Activated CD8-positive, alpha-beta T cell treated with anti-CD3 and anti-CD28 coated beads, Interleukin-2, amount 10 ng/mL, durations not matched to agents 7 days and 5 days (primary cell): ENCODE measurements at regions of chr6 and their contacts with region 1.

Region 1: GRCh38 chr6:154156135-154156896 is 117.3 kb downstream of the OPRM1 start:
- DNase-seq: peak; percentile 79
- ATAC-seq: peak; percentile 96
- H3K4me3 Mint-ChIP-seq: peak overlapping the region; percentile 64
- H3K27ac Mint-ChIP-seq: peak overlapping the region; percentile 88
- H3K4me1 Mint-ChIP-seq: peaks cover 33% of the 10 kb centered on the region
- H3K27me3 Mint-ChIP-seq: no peaks in the 10 kb centered on the region

Region 2: GRCh38 chr6:152471456-152472265 is 1684.7 kb before region 1 on chr6:
- CTCF ChIA-PET with region 1: no interaction called
- POLR2A ChIA-PET with region 1: no interaction called
- DNase-seq: no peak
- ATAC-seq: no peak
- H3K4me3 Mint-ChIP-seq: no peak overlapping the region
- H3K27ac Mint-ChIP-seq: no peak overlapping the region
- H3K4me1 Mint-ChIP-seq: peaks cover 4% of the 10 kb centered on the region
- H3K27me3 Mint-ChIP-seq: peaks cover 3% of the 10 kb centered on the region

Region 3: GRCh38 chr6:154127657-154128056 is 28.7 kb before region 1 on chr6:
- CTCF ChIA-PET with region 1: no interaction called
- POLR2A ChIA-PET with region 1: no interaction called
- DNase-seq: no peak
- ATAC-seq: no peak
- H3K4me3 Mint-ChIP-seq: no peak overlapping the region
- H3K27ac Mint-ChIP-seq: no peak overlapping the region
- H3K4me1 Mint-ChIP-seq: peaks cover 3% of the 10 kb centered on the region
- H3K27me3 Mint-ChIP-seq: no peaks in the 10 kb centered on the region

Region 4: GRCh38 chr6:154169193-154169847 is 13.0 kb after region 1 on chr6:
- CTCF ChIA-PET with region 1: interaction called, 12 read pairs
- POLR2A ChIA-PET with region 1: no interaction called
- DNase-seq: no peak
- ATAC-seq: peak; percentile 23
- H3K4me3 Mint-ChIP-seq: no peak overlapping the region
- H3K27ac Mint-ChIP-seq: peak overlapping the region; percentile 45
- H3K4me1 Mint-ChIP-seq: peaks cover 29% of the 10 kb centered on the region
- H3K27me3 Mint-ChIP-seq: no peaks in the 10 kb centered on the region

Region 5: DNA sequence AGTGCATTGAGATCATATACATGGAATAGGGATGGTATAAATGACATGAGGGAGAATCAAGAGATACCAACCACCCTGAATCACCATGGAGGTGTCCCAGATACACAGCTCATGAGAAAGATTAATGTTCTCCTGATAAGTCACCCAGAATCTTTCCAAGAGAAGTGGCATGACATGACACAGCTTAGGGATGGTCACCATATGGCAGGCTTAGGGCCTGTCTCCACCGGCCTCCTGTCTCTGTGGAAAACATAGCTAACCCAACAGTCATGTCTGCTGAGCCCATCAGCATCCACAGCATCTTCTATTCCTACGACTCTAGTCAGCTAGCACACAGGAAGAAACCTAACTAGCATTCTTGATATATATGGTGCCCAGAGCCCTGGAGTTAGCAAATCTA is 67.0 kb after region 1 on chr6:
- CTCF ChIA-PET with region 1: interaction called, 10 read pairs
- POLR2A ChIA-PET with region 1: interaction called, 3 read pairs
- DNase-seq: no peak
- ATAC-seq: no peak
- H3K4me3 Mint-ChIP-seq: no peak overlapping the region
- H3K27ac Mint-ChIP-seq: no peak overlapping the region
- H3K4me1 Mint-ChIP-seq: peaks cover 43% of the 10 kb centered on the region
- H3K27me3 Mint-ChIP-seq: no peaks in the 10 kb centered on the region

Region 6: DNA sequence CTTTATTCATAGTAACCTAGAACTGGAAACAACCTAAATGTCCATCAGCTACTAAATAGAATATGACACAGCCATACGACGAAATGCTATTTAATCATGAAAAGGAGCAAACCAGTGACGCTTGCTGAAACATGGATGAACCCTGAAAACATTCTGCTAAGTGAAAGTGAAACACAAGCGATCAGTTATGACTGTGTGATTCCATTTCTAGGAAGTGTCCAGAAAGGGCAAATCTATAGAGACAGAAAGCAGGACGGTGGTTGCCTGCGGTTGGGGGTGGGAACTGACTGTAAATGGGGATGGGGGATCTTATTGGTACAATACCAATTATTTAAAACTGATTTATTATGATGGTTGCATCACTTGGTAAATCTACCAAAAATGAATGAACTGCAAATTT is 73.5 kb after region 1 on chr6:
- CTCF ChIA-PET with region 1: interaction called, 10 read pairs
- POLR2A ChIA-PET with region 1: no interaction called
- DNase-seq: peak; percentile 66
- ATAC-seq: peak; percentile 81
- H3K4me3 Mint-ChIP-seq: peak overlapping the region; percentile 76
- H3K27ac Mint-ChIP-seq: peak overlapping the region; percentile 92
- H3K4me1 Mint-ChIP-seq: peaks cover 64% of the 10 kb centered on the region
- H3K27me3 Mint-ChIP-seq: no peaks in the 10 kb centered on the region

Region 7: GRCh38 chr6:154247119-154247861 is 91.0 kb after region 1 on chr6:
- CTCF ChIA-PET with region 1: interaction called, 16 read pairs
- POLR2A ChIA-PET with region 1: no interaction called
- DNase-seq: peak; percentile 62
- ATAC-seq: peak; percentile 62
- H3K4me3 Mint-ChIP-seq: peak overlapping the region; percentile 85
- H3K27ac Mint-ChIP-seq: peak overlapping the region; percentile 90
- H3K4me1 Mint-ChIP-seq: peaks cover 82% of the 10 kb centered on the region
- H3K27me3 Mint-ChIP-seq: no peaks in the 10 kb centered on the region

Region 8: GRCh38 chr6:154370545-154370944 is 214.2 kb after region 1 on chr6:
- CTCF ChIA-PET with region 1: interaction called, 24 read pairs
- POLR2A ChIA-PET with region 1: no interaction called
- DNase-seq: peak; percentile 39
- ATAC-seq: no peak
- H3K4me3 Mint-ChIP-seq: no peak overlapping the region
- H3K27ac Mint-ChIP-seq: no peak overlapping the region
- H3K4me1 Mint-ChIP-seq: no peaks in the 10 kb centered on the region
- H3K27me3 Mint-ChIP-seq: no peaks in the 10 kb centered on the region